ENCODE measurements at regions of chr2 and their contacts with region 1.

Region 1: GRCh38 chr2:155766342-155767115 is 566.0 kb downstream of the NR4A2 start:
- DNase-seq: no peak
- ATAC-seq: no peak
- H3K4me3 Mint-ChIP-seq: no peak overlapping the region
- H3K27ac Mint-ChIP-seq: no peak overlapping the region
- H3K4me1 Mint-ChIP-seq: no peaks in the 10 kb centered on the region
- H3K27me3 Mint-ChIP-seq: no peaks in the 10 kb centered on the region

Region 2: DNA sequence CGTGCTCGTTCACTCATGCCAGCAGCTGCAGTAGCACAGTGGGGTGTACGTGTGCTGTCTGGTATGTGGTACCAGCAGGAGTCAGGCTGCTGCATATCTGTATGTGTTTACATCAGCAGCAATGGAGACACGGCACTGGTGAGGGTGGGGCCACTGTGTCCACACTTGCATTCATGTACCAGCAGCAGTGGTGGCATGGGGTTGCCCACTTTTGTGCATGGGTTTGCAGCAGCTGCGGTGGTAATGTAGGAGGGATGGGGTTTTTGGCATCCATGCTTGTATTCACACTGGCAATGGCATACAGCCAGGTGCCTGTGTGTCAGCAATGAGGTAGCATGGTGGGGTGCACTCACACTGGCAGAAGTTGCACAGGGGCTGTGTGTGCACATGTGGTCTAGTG is 880.2 kb before region 1 on chr2:
- CTCF ChIA-PET with region 1: no interaction called
- POLR2A ChIA-PET with region 1: no interaction called
- intact Hi-C with region 1: loop called in 1 of 2 experiments (anchors 5 kb)
- DNase-seq: no peak
- ATAC-seq: no peak
- H3K4me3 Mint-ChIP-seq: no peak overlapping the region
- H3K27ac Mint-ChIP-seq: no peak overlapping the region
- H3K4me1 Mint-ChIP-seq: no peaks in the 10 kb centered on the region
- H3K27me3 Mint-ChIP-seq: no peaks in the 10 kb centered on the region